Sigmoid colon (tissue), 7 donors: ENCODE measurements at regions of chr11 and their contacts with region 1.

Region 1: GRCh38 chr11:62601394-62602140 is at the start of gene MTA2:
- DNase-seq: peak; percentile 99
- H3K4me3 ChIP-seq: peak within 1 kb of the TSS; percentile 89 to 99 (median 94)
- H3K27ac ChIP-seq: peak within 1 kb of the TSS; percentile 94 to 99 (median 97)
- H3K4me1 ChIP-seq: peaks cover 0 to 43% (median 39%) of the 10 kb centered on the region in 4 donors
- H3K27me3 ChIP-seq: no peaks in the 10 kb centered on the region
- CTCF ChIP-seq: no peak
- EP300 ChIP-seq: no peak
- POLR2A ChIP-seq: peak; percentile 38 to 47
- total RNA-seq, gene MTA2: 50.1 to 62.2 (median 58.1) TPM

Region 2: DNA sequence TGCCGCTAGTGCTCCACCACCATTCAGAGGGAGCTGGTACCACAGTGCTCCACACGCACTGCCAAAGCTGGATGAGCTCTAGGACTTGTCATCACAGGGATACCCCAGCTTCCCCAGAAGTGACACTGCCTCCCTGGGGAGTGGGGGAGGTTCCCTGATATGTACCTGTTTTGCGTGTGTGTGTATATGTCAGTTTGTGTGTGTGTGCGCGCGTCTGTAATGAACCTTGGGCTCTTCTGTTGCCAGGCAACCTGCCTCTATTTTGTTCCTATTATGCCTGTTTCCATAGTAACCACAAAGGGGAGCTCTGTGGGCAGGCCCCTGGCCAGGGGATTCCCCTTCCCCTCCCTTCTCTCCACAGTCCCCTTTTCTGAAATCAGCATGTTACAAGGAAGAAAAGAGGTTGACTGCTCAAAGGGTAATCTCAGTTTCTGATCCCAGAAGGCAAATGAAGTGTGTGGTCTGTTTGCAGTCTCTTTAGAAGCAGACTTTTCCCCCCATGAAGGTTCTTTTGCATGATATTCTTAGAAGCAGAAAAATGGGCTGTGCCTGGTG is 49.8 kb before region 1 on chr11:
- intact Hi-C with region 1: loop called (anchors 5 kb)
- DNase-seq: peak; percentile 82
- H3K4me3 ChIP-seq: no peak overlapping the region
- H3K27ac ChIP-seq: peak overlapping the region; percentile 92 to 100 (median 96)
- H3K4me1 ChIP-seq: peaks cover 0 to 85% (median 82%) of the 10 kb centered on the region in 4 donors
- H3K27me3 ChIP-seq: no peaks in the 10 kb centered on the region
- CTCF ChIP-seq: no peak
- EP300 ChIP-seq: peak in 1 of 4 donors; percentile 61
- POLR2A ChIP-seq: no peak

Region 3: DNA sequence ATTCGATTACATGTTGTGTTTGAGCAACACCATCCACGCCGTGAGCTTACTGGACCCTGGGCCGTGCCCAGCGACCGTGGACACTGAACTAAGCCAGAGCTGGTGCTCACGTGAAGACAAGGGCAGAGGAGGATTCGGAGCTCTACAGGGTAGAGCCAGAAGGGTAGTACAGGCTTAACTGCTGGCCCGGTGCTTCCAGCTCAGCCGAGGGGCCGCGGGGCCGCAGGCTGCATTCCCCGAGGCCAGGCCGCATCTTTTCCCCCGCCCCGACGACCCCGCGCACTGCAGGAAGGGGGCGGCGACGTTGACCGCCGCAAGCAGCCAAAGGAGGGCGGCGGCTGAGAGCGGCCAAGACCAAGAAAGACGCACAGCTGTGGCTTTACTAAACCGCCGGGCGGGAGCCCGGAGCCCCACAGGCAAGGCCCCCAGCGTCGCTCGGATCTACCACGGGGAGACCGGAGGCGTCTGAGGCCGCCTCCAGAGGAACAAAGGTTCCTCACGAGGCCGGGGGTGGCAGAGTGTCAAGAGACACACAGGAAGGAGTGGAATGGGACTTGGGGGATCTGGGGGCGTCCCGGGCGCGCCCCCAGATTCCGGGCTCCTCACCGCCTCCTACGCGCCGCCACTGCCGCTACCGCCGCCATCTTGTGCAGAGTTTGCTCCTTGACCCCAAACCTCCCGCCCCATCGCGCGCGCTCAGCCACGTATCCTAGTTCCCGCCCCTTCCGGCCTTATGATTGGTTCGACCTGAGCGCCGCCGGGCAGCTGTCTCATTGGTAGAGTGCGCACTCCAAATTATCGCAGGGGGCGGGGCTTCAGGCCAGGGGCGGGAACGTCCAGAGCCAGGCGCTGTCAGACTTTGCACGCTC is 44.6 kb after region 1 on chr11 and contains the start of gene GANAB:
- intact Hi-C with region 1: no loop called
- DNase-seq: peak; percentile 100
- H3K4me3 ChIP-seq: peak within 1 kb of the TSS; percentile 63 to 98 (median 86)
- H3K27ac ChIP-seq: peak within 1 kb of the TSS; percentile 89 to 96 (median 94)
- H3K4me1 ChIP-seq: peaks cover 0 to 32% (median 23%) of the 10 kb centered on the region in 4 donors
- H3K27me3 ChIP-seq: no peaks in the 10 kb centered on the region
- CTCF ChIP-seq: no peak
- EP300 ChIP-seq: no peak
- POLR2A ChIP-seq: peak; percentile 81 to 86
- total RNA-seq, gene GANAB: 67.4 to 111 (median 77.9) TPM

Region 4: GRCh38 chr11:62732801-62733200 is 131.2 kb after region 1 on chr11:
- intact Hi-C with region 1: no loop called
- DNase-seq: no peak
- H3K4me3 ChIP-seq: no peak overlapping the region
- H3K27ac ChIP-seq: no peak overlapping the region
- H3K4me1 ChIP-seq: peaks cover 0 to 34% (median 24%) of the 10 kb centered on the region in 4 donors
- H3K27me3 ChIP-seq: no peaks in the 10 kb centered on the region
- CTCF ChIP-seq: no peak
- EP300 ChIP-seq: no peak
- POLR2A ChIP-seq: no peak

Region 5: GRCh38 chr11:62823677-62824076 is 222.1 kb after region 1 on chr11:
- intact Hi-C with region 1: no loop called
- DNase-seq: no peak
- H3K4me3 ChIP-seq: no peak overlapping the region
- H3K27ac ChIP-seq: no peak overlapping the region
- H3K4me1 ChIP-seq: peaks cover 0 to 7% (median 3%) of the 10 kb centered on the region in 4 donors
- H3K27me3 ChIP-seq: no peaks in the 10 kb centered on the region
- CTCF ChIP-seq: no peak
- EP300 ChIP-seq: no peak
- POLR2A ChIP-seq: no peak